Common myeloid progenitor, CD34-positive (primary cell): ENCODE measurements at regions of chr16 and their contacts with region 1.

Region 1: DNA sequence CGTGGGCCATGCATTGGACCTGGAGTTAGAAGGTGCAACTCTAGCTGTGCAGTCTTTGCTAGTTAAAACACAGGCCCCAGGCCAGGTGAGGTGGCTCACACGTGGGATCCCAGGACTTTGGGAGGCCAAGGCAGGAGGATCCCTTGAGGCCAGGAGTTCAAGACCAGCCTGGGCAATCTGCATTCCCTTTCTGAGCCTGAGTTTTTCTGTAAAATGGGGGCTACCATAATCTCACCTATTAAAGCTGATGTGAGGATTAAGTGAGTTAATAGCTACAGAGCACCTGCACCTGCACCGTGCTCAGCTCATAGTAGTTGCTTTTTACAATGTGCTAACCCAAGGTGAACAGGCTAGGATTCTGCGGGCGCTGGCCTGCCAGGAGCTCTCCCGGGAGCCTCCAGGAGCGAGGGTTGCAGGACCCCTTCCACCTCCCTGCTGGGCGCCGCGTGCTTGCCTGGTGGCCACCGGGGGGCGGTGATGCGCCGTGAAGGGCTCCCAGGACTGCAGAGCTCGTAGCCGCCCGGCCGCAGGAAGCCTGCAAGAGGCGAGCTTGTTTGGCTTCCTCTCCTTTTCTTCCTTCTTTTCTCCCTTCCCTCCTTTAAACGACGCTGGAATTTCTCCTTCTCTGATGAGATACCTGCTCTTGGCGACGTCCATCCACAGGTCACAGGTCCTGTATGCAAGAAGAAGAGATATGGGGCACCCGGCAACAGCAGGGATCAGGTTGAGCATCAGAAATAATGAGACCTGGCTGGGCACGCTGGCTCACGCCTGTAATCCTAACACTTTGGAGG is 51.3 kb downstream of the ZFP90 start:
- DNase-seq: peak; percentile 46 to 65 (median 63)
- H3K4me3 ChIP-seq: peak overlapping the region in 1 of 7 experiments; percentile 37
- H3K27ac ChIP-seq: no peak overlapping the region
- H3K4me1 ChIP-seq: peaks cover 0 to 4% (median under 1%) of the 10 kb centered on the region in 4 experiments
- H3K27me3 ChIP-seq: peaks cover 0 to 2% (median 0%) of the 10 kb centered on the region in 5 experiments

Region 2: DNA sequence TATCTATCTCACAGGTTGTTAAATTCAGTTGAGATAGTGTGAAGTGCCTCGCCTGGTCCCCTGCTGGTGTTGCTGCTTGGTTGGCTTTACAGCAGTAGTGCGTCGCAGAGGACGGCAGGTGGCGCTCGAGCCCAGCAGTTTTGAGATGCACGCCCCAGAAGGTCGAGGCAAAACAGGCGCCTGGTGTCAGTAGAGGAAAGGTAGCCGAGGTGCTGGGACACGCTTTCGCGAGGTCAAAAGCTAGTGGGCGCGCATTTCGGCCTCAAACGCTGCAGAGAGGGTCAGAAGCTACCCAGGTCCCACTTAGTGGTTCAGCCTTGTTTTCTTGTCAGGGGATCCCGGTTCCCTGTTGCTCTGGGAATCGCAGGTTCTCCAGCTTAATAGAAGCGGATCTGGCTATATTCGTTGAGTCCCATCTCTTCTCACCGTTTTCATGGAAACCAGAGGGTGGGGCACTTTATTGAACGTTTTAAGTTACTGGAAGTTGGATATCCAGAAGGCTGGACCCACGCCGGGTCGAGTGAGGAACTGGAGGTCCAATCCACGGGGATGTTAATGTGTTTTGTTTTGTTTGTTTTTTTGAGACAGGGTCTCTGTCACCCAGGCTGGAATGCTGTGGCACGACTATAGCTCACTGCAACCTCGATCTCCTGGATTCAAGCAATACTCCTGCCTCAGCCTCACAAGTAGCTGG is 61.6 kb before region 1 on chr16:
- CTCF ChIA-PET with region 1: interaction called, 21 read pairs
- POLR2A ChIA-PET with region 1: no interaction called
- DNase-seq: peak; percentile 82 to 91 (median 89)
- H3K4me3 ChIP-seq: peak overlapping the region in 1 of 7 experiments; percentile 10
- H3K27ac ChIP-seq: no peak overlapping the region
- H3K4me1 ChIP-seq: peaks cover 0 to 20% (median 14%) of the 10 kb centered on the region in 4 experiments
- H3K27me3 ChIP-seq: peaks cover 0 to 9% (median 0%) of the 10 kb centered on the region in 5 experiments

Region 3: DNA sequence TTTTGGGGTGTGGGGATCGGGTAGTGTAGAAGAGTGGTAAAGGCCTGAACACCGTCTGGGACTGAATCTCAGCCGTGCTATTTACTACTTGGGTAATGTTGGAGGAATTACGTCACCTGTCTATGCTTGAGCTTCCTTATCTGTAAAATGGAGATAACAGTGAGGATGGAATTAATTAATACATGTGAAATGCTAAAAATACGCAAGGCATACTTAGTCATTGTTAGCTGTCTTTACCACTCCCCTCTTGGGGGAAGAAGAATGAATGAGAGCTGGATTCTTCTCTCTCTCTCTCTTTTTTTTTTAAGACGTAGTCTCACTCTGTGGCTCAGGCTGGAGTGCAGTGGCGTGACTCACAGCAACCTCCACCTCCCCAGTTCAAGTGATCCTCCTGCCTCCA is 211.8 kb after region 1 on chr16:
- CTCF ChIA-PET with region 1: interaction called, 14 read pairs
- POLR2A ChIA-PET with region 1: no interaction called
- DNase-seq: no peak
- H3K4me3 ChIP-seq: no peak overlapping the region
- H3K27ac ChIP-seq: no peak overlapping the region
- H3K4me1 ChIP-seq: no peaks in the 10 kb centered on the region
- H3K27me3 ChIP-seq: peaks cover 0 to 6% (median 0%) of the 10 kb centered on the region in 5 experiments